HEK293 (cell line): ENCODE measurements at regions of chr14 and their contacts with region 1.

Region 1: GRCh38 chr14:24806061-24806678 is 172.2 kb upstream of the GZMB start:
- H3K4me3 ChIP-seq: no peak overlapping the region
- H3K27ac ChIP-seq: no peak overlapping the region
- H3K4me1 ChIP-seq: peaks cover 5% of the 10 kb centered on the region
- CTCF ChIP-seq: peak; percentile 68; the same call in 1 of the 2 replicates

Region 2: DNA sequence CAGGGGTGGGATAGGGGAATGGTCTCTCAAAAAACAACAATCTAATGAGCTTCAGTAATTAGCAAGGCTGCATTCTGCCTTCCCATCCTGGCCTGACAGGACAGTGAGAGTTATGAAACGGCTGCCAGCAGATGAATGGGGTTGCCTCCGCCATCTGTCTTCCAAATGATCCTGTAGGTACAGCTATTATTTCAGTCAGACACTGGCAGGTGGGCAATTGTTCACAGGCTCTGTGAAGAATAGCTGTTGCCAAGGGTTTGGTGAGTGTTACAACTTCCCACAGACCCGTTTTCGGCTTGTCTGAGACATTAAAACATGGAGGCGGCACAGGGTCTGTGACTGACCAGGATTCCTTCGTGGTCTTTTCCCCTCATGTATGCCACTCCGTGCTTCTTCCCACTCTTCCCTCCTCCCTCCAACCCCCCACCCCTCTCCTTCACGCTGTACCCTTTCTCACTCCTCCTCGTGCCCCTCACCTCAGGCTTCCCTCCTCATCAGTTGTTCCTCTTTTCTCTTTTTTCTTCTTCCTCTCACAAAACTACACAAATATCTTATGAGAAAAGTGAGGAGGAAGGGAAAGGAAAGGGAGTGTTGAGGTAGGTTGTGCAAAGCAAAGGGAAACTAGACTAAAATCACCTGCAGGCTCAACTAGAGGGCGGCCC is 11.4 kb before region 1 on chr14:
- CTCF ChIA-PET with region 1: interaction called, 14 read pairs
- POLR2A ChIA-PET with region 1: no interaction called
- H3K4me3 ChIP-seq: no peak overlapping the region
- H3K27ac ChIP-seq: no peak overlapping the region
- H3K4me1 ChIP-seq: no peaks in the 10 kb centered on the region
- CTCF ChIP-seq: no peak

Region 3: DNA sequence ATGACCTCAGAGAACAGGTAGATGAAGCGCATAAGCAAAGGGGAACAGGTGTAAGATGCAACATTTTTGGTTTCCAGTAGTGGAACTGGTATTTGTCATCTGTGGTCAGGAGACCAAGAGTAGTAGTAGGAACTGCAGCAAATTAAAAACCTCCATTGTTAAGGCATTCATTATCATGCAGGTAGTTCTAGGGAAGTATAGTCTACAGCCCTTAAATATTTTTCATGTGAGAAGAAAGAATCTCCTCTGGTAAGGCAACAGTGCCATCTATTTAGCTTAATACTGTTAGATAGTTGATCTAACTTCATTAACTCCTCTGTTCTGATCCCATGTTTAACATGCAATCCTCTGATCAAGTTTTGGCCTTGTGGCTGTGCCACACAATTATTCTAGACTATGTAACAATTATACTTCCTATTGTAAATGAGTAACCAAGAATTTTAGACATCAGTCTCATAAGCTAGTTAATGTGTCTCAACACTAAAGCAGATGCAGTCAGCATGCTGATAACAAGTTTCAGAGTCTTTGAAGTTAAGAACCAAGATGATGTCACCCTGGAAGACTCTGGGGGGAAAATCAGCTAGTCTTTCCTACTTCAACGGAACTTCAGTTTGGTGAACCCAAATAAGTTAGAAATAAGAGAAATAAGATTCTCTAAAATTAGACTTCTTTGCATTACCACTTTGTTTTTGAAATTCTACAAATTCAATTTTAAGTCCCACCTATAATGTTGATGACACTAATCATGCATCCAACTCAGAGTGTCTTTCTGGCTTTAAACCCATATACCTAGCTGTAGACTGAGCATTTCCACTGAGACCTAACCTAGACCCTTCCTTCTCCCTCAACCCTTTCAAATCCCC is 172.9 kb after region 1 on chr14:
- CTCF ChIA-PET with region 1: interaction called, 17 read pairs
- POLR2A ChIA-PET with region 1: no interaction called
- H3K4me3 ChIP-seq: no peak overlapping the region
- H3K27ac ChIP-seq: no peak overlapping the region
- H3K4me1 ChIP-seq: peaks cover 20% of the 10 kb centered on the region; the same call in 1 of the 2 replicates
- CTCF ChIP-seq: no peak

Region 4: DNA sequence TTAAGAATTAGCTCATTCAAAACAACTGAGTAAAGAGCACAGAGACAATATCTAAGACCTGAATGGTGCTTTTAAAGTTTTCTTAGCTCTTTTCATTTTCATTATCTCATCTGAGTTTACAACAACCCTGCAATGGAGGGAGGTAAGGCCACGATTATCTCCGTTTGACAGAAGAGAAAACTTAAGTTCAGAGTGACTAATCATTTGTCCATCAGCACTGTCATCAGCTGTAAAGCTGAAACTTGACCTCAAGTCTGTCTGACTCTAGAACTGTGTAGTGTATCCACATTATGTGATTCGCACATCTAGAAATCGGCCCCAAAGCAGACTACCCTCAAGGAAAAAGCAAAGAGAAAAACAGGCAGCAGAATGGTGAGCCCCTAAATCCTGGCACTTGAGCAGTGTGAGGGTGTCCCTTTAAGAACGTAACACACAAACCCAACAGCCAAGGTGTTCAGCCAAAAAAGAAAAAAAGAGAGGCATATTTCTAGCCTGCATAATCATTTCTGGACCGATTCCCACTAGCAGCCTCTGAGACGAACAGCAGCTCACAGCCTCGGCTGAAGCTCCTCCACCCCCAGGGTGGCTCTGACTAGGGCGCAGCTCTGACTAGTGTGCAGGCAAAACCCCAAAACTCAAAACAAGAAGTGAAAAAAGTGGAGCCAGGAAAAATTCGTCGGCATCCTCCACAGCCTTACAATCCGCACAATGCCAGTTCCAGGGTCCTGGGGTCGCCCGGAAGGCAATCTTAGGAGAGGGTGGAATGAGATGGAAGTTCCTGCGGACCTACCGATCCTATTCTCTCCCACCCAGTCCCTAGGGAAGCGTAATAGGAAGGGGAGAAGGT is 242.2 kb after region 1 on chr14:
- CTCF ChIA-PET with region 1: interaction called, 10 read pairs
- POLR2A ChIA-PET with region 1: no interaction called
- H3K4me3 ChIP-seq: no peak overlapping the region
- H3K27ac ChIP-seq: peak overlapping the region; percentile 76; the same call in 1 of the 2 replicates
- H3K4me1 ChIP-seq: peaks cover 16% of the 10 kb centered on the region
- CTCF ChIP-seq: no peak

Region 5: GRCh38 chr14:25150934-25151790 is 345.0 kb after region 1 on chr14:
- CTCF ChIA-PET with region 1: interaction called, 35 read pairs
- POLR2A ChIA-PET with region 1: no interaction called
- H3K4me3 ChIP-seq: no peak overlapping the region
- H3K27ac ChIP-seq: no peak overlapping the region
- H3K4me1 ChIP-seq: no peaks in the 10 kb centered on the region
- CTCF ChIP-seq: no peak